ENCODE measurements at regions of chr3 and their contacts with region 1.

Region 1: GRCh38 chr3:25427942-25428788 is at the start of gene RARB:
- DNase-seq: peak; percentile 89
- H3K4me3 ChIP-seq: peak within 1 kb of the TSS; percentile 56
- H3K27ac ChIP-seq: no peak within 1 kb of the TSS
- H3K4me1 ChIP-seq: peaks cover 5% of the 10 kb centered on the region
- H3K27me3 ChIP-seq: peaks cover 40% of the 10 kb centered on the region
- CTCF ChIP-seq: no peak
- total RNA-seq, gene RARB: 0.24 and 0.44 TPM in 2 replicates

Region 2: GRCh38 chr3:25229586-25229985 is 198.6 kb before region 1 on chr3:
- CTCF ChIA-PET with region 1: no interaction called
- POLR2A ChIA-PET with region 1: no interaction called
- intact Hi-C with region 1: no loop called
- DNase-seq: no peak
- H3K4me3 ChIP-seq: no peak overlapping the region
- H3K27ac ChIP-seq: no peak overlapping the region
- H3K4me1 ChIP-seq: no peaks in the 10 kb centered on the region
- H3K27me3 ChIP-seq: peaks cover 15% of the 10 kb centered on the region
- CTCF ChIP-seq: no peak

Region 3: GRCh38 chr3:25573386-25574171 is 145.4 kb after region 1 on chr3:
- CTCF ChIA-PET with region 1: no interaction called
- POLR2A ChIA-PET with region 1: no interaction called
- intact Hi-C with region 1: loop called (anchors 5 kb)
- DNase-seq: peak; percentile 81
- H3K4me3 ChIP-seq: no peak overlapping the region
- H3K27ac ChIP-seq: peak overlapping the region; percentile 0
- H3K4me1 ChIP-seq: peaks cover 6% of the 10 kb centered on the region
- H3K27me3 ChIP-seq: no peaks in the 10 kb centered on the region
- CTCF ChIP-seq: no peak

Region 4: DNA sequence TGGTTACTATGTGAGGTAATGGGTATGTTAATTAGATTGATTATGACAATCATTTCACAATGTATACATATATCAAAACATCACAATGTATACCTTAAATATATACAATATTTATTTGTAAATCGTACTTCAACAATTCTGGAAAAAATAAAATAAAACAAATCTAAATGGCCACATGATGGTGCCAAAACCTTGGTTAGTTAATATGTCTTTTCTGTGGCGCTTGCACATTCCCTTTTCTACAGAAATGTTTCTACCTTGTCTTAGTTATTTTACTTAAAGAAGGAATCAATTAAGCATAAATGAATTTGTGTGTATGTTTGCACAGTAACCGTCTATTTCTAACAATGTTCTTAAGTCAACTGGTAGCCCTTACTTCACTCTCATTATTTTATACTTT is 415.2 kb after region 1 on chr3:
- CTCF ChIA-PET with region 1: no interaction called
- POLR2A ChIA-PET with region 1: no interaction called
- intact Hi-C with region 1: no loop called
- DNase-seq: no peak
- H3K4me3 ChIP-seq: no peak overlapping the region
- H3K27ac ChIP-seq: no peak overlapping the region
- H3K4me1 ChIP-seq: no peaks in the 10 kb centered on the region
- H3K27me3 ChIP-seq: no peaks in the 10 kb centered on the region
- CTCF ChIP-seq: peak; percentile 44; the same call in 1 of the 2 replicates